H1 (cell line): ENCODE measurements at regions of chr3 and their contacts with region 1.

Region 1: GRCh38 chr3:116601206-116601605 is 108.4 kb upstream of the TUSC7 start:
- DNase-seq: no peak
- H3K4me3 ChIP-seq: no peak overlapping the region
- H3K27ac ChIP-seq: no peak overlapping the region
- H3K4me1 ChIP-seq: no peaks in the 10 kb centered on the region
- H3K27me3 ChIP-seq: no peaks in the 10 kb centered on the region
- CTCF ChIP-seq: no peak
- EP300 ChIP-seq: no peak
- POLR2A ChIP-seq: no peak
- RAD21 ChIP-seq: no peak

Region 2: DNA sequence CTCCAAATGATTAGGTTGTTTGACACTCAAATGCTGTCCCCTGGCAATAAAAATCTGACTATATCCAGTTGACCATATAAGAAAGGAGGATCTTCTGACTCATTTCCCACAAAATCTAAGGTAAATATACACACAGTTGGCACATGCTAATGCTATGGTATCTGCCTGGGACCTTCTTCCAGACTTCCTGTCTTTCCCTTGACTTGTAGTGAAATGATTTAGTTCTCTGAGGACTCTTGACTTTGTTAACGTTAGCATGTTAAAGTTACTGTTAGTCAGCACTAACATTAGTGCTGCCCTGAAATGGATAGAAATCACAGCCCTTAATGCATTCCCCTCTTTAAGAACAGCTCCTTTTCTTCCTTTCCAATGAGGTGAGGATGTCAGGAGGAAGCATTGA is 31.6 kb before region 1 on chr3:
- CTCF ChIA-PET with region 1: no interaction called
- POLR2A ChIA-PET with region 1: no interaction called
- DNase-seq: no peak
- H3K4me3 ChIP-seq: no peak overlapping the region
- H3K27ac ChIP-seq: no peak overlapping the region
- H3K4me1 ChIP-seq: no peaks in the 10 kb centered on the region; a peak in 1 of 7 replicates
- H3K27me3 ChIP-seq: no peaks in the 10 kb centered on the region
- CTCF ChIP-seq: no peak
- EP300 ChIP-seq: no peak
- POLR2A ChIP-seq: no peak
- RAD21 ChIP-seq: no peak

Region 3: DNA sequence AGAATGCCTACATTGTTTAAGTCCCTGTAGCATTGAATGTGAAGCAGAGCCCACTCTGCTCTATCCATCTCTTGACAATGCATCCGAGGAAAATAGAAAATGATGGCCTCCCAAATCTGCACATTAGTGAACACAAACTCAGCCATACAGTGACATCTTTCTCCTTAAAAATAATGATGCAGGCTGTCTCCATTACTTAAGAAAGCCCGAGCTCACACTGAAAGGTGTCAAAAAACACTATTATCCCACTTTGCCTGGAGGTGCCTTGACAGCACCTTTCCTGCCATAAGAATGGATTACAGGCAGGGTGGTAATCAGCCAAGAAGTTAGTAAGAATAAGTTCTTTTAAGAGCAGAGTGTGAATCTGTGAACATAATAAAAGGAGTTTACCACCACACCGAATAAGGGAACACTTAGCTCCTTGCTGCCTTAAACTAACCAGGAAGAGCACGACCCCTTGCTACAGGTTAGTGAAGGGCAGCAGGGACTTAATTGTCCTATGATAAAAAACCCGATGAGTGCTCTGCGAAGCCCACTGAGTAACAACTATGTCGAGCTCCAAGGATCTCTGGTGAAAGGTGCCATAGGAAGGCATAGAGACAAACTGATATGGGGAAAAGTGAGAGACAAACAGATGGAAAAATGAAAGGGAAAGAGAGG is 14.8 kb before region 1 on chr3:
- CTCF ChIA-PET with region 1: interaction called, 14 read pairs
- POLR2A ChIA-PET with region 1: no interaction called
- DNase-seq: no peak
- H3K4me3 ChIP-seq: no peak overlapping the region
- H3K27ac ChIP-seq: no peak overlapping the region
- H3K4me1 ChIP-seq: no peaks in the 10 kb centered on the region
- H3K27me3 ChIP-seq: no peaks in the 10 kb centered on the region
- CTCF ChIP-seq: peak in 1 of 3 experiments; percentile 36; a peak in 1 of 4 replicates
- EP300 ChIP-seq: no peak
- POLR2A ChIP-seq: no peak
- RAD21 ChIP-seq: peak; percentile 51

Region 4: GRCh38 chr3:116614795-116615362 is 13.7 kb after region 1 on chr3:
- CTCF ChIA-PET with region 1: interaction called, 69 read pairs
- POLR2A ChIA-PET with region 1: no interaction called
- DNase-seq: no peak
- H3K4me3 ChIP-seq: no peak overlapping the region
- H3K27ac ChIP-seq: no peak overlapping the region
- H3K4me1 ChIP-seq: no peaks in the 10 kb centered on the region
- H3K27me3 ChIP-seq: peaks cover 0 to 1% (median 0%) of the 10 kb centered on the region in 4 experiments; a peak in 1 of 7 replicates
- CTCF ChIP-seq: peak in 2 of 3 experiments; percentile 2 to 61; a peak in 2 of 4 replicates
- EP300 ChIP-seq: no peak
- POLR2A ChIP-seq: no peak
- RAD21 ChIP-seq: peak; percentile 30 to 47; a peak in 3 of 4 replicates

Region 5: GRCh38 chr3:116741467-116741866 is 140.3 kb after region 1 on chr3:
- CTCF ChIA-PET with region 1: no interaction called
- POLR2A ChIA-PET with region 1: no interaction called
- DNase-seq: no peak
- H3K4me3 ChIP-seq: no peak overlapping the region
- H3K27ac ChIP-seq: no peak overlapping the region
- H3K4me1 ChIP-seq: no peaks in the 10 kb centered on the region
- H3K27me3 ChIP-seq: no peaks in the 10 kb centered on the region
- CTCF ChIP-seq: no peak
- EP300 ChIP-seq: no peak
- POLR2A ChIP-seq: no peak
- RAD21 ChIP-seq: no peak

Region 6: DNA sequence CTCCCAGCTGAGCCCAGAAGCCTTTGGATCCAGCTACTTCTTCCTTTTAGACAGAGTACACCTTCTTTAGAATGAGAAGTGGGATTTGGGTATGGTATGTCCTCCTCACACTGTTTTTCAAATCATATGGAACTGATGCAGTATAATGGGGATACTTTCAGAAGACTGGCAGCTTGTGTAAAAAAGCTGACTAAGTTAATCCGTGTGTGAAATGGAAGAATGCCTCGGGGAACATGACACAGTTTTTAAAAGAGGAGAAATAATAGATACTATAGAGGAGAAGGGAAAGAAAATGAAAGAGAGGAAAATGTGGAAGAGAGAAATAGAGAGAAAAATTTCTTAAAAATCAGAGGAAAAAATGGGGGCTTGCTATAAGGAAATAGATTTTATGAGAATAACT is 156.1 kb after region 1 on chr3:
- CTCF ChIA-PET with region 1: interaction called, 11 read pairs
- POLR2A ChIA-PET with region 1: no interaction called
- DNase-seq: no peak
- H3K4me3 ChIP-seq: no peak overlapping the region
- H3K27ac ChIP-seq: no peak overlapping the region
- H3K4me1 ChIP-seq: peaks cover 0 to 2% (median 0%) of the 10 kb centered on the region in 4 experiments; a peak in 2 of 7 replicates
- H3K27me3 ChIP-seq: no peaks in the 10 kb centered on the region
- CTCF ChIP-seq: no peak
- EP300 ChIP-seq: no peak
- POLR2A ChIP-seq: no peak
- RAD21 ChIP-seq: no peak